SK-N-SH (cell line): ENCODE measurements at regions of chr12 and their contacts with region 1.

Region 1: DNA sequence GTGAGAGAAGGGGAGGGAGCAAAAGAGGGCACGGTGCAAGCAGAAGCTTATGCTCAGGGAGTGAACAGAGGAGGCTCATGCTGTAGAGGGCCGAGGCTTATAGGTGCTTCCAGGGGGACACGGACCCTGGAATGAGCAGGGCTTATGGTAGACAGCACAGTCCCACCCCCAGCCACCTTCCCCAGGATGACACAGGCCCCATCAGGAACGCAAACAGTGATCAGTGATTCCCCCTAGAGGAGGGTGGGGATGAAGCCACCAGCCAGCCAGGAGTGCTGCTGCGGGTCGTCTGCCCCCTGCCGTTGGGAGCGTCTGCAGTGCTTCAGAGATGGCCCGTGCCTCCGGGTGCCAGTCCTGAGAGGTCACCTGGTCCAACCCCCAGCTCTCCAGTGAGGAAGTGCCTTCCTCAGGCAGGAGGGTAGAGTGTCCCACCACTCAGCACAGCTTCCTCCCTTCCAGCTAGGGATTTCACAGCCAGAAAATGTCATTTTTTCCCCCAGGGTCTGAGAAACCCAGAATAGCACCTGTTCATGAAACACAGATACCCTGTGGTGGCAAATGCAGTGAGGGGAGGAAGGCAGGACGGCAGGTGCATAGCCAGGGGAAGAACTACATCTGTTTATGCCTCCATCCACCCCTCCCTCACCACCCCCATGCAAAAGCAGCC is 60.7 kb downstream of the SLC6A12 start:
- DNase-seq: peak; percentile 93
- H3K4me3 ChIP-seq: peak overlapping the region in 1 of 2 experiments; percentile 30; a peak in 1 of 4 replicates
- H3K27ac ChIP-seq: no peak overlapping the region; a peak in 1 of 4 replicates
- H3K4me1 ChIP-seq: peaks cover 0 to 13% of the 10 kb centered on the region in 2 experiments; a peak in 1 of 4 replicates
- H3K27me3 ChIP-seq: no peaks in the 10 kb centered on the region
- CTCF ChIP-seq: peak; percentile 63
- EP300 ChIP-seq: no peak
- RAD21 ChIP-seq: peak; percentile 79

Region 2: DNA sequence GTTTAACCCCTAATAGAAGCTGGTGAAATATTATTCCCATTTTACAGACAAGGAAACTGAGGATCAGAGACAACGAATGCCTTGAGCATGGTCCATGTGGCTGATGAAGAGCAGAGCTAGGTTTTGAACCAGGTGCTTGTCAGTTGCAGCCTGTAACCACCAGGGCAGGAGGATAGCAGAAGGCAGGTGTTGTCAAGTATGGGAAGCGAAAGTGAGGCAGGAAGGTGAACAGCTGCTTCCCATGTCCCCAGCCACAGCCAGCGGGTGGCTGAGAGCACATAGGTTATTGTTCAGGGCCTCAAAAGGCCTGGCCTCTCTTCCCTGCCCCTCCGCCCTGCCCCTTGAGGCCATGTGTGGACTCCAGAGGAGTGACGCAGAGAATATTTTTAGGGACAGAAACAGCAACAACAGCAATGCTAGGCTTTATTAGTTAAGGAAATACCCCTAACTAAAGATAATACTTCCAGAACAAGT is 47.1 kb before region 1 on chr12:
- CTCF ChIA-PET with region 1: interaction called, 29 read pairs
- POLR2A ChIA-PET with region 1: no interaction called
- DNase-seq: no peak
- H3K4me3 ChIP-seq: no peak overlapping the region
- H3K27ac ChIP-seq: no peak overlapping the region
- H3K4me1 ChIP-seq: peaks cover 0 to 14% of the 10 kb centered on the region in 2 experiments; a peak in 1 of 4 replicates
- H3K27me3 ChIP-seq: peaks cover 12% of the 10 kb centered on the region; the same call in 1 of the 2 replicates
- CTCF ChIP-seq: no peak
- EP300 ChIP-seq: no peak
- RAD21 ChIP-seq: no peak

Region 3: GRCh38 chr12:138898-139534 is 14.2 kb before region 1 on chr12:
- CTCF ChIA-PET with region 1: interaction called, 24 read pairs
- POLR2A ChIA-PET with region 1: no interaction called
- DNase-seq: no peak
- H3K4me3 ChIP-seq: no peak overlapping the region
- H3K27ac ChIP-seq: no peak overlapping the region
- H3K4me1 ChIP-seq: no peaks in the 10 kb centered on the region
- H3K27me3 ChIP-seq: no peaks in the 10 kb centered on the region; the same call in 1 of the 2 replicates
- CTCF ChIP-seq: no peak
- EP300 ChIP-seq: no peak
- RAD21 ChIP-seq: no peak

Region 4: GRCh38 chr12:169528-170370 is 16.5 kb after region 1 on chr12:
- CTCF ChIA-PET with region 1: interaction called, 24 read pairs
- POLR2A ChIA-PET with region 1: no interaction called
- DNase-seq: no peak
- H3K4me3 ChIP-seq: no peak overlapping the region
- H3K27ac ChIP-seq: no peak overlapping the region
- H3K4me1 ChIP-seq: peaks cover 0 to 48% of the 10 kb centered on the region in 2 experiments; a peak in 2 of 4 replicates
- H3K27me3 ChIP-seq: no peaks in the 10 kb centered on the region
- CTCF ChIP-seq: peak; percentile 35; the same call in 1 of the 2 replicates
- EP300 ChIP-seq: no peak
- RAD21 ChIP-seq: no peak

Region 5: DNA sequence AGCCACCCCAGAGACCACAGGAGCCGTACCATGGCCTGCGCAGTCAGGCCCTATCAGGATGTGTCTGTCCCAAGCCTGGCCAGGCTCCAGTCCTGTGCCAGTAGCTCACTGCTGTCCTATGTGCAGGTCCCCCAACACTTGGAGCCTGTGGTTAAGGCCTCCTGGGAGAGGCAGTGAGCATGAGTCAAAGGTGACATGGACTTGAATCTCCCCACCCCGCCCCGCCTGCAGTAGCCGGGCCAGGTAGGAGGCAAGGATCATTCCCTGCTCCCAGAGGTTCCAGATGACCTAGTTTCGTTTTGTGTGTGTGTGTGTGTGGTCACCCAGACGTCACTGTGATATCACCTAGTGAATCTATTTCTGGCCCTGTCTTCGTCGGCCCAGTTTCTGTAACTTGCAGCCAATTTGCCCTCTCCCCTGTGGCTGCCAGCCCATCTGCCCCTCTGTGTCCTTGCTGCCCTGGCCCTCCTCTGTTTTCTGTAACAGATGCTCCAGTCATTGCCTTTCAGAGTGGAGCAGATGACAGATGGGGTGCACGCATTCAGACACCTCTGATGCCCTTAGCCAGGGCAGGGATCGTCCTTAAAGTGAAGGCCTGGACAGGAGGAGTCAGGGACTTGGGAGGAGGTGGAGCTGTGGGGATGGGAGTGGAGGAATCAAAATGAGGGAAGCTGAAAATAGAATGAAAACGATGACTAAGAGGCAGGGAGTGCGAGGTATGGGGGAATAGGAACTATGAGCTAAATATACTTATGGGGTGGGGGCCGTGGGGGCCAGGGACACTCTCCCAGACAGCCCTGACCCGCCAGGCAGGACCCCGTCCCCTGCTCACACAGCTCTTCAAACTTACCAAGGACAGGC is 23.3 kb after region 1 on chr12:
- CTCF ChIA-PET with region 1: interaction called, 24 read pairs
- POLR2A ChIA-PET with region 1: no interaction called
- DNase-seq: peak; percentile 75
- H3K4me3 ChIP-seq: no peak overlapping the region
- H3K27ac ChIP-seq: peak overlapping the region; percentile 75 to 92
- H3K4me1 ChIP-seq: peaks cover 14 to 87% of the 10 kb centered on the region in 2 experiments
- H3K27me3 ChIP-seq: no peaks in the 10 kb centered on the region
- CTCF ChIP-seq: no peak
- EP300 ChIP-seq: peak in 1 of 2 experiments; percentile 35; a peak in 2 of 4 replicates
- RAD21 ChIP-seq: no peak

Region 6: DNA sequence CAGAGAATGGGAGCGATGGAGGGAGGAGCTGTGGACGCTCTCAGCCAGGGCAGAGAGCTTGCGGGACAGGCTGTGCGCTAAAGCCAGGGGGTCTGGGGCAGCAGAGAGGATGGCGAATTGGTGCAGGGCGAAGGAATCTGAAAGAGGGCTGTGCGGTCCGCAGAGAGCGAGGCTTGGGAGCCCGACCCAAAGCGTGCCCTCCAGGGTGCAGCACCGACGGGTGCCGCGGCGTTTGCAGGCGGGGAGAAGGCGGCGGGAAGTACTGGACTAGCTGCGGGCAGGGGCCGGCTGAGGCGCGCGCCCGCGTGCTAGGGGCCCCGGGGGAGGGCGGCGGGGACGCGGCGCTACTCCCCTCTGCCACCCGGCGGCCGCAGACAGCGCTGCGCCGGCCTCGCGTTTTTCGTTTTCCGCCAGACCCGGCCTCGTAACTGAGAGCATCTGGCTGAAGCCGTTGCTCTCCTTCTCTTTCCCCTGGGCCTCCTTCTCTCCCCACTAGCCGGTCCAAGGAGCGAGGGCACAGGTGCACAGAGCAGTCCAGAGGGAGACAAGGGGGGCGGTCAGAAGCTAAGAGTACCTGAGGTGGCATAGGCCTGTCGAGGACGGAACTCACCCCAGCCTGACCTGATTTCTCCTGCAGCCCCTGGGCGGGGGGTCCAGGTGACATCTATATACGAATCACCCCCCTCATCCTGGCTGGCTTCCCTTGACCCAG is 35.9 kb after region 1 on chr12:
- CTCF ChIA-PET with region 1: interaction called, 11 read pairs
- POLR2A ChIA-PET with region 1: no interaction called
- DNase-seq: peak; percentile 96
- H3K4me3 ChIP-seq: peak overlapping the region; percentile 43 to 56
- H3K27ac ChIP-seq: no peak overlapping the region
- H3K4me1 ChIP-seq: peaks cover 0 to 22% of the 10 kb centered on the region in 2 experiments; a peak in 1 of 4 replicates
- H3K27me3 ChIP-seq: peaks cover 5% of the 10 kb centered on the region
- CTCF ChIP-seq: peak; percentile 74
- EP300 ChIP-seq: no peak
- RAD21 ChIP-seq: peak; percentile 60

Region 7: GRCh38 chr12:219891-220352 is 66.7 kb after region 1 on chr12:
- CTCF ChIA-PET with region 1: interaction called, 11 read pairs
- POLR2A ChIA-PET with region 1: no interaction called
- DNase-seq: peak; percentile 91
- H3K4me3 ChIP-seq: no peak overlapping the region; a peak in 1 of 4 replicates
- H3K27ac ChIP-seq: no peak overlapping the region
- H3K4me1 ChIP-seq: peaks cover 0 to 2% of the 10 kb centered on the region in 2 experiments; a peak in 1 of 4 replicates
- H3K27me3 ChIP-seq: no peaks in the 10 kb centered on the region
- CTCF ChIP-seq: peak; percentile 68
- EP300 ChIP-seq: no peak
- RAD21 ChIP-seq: peak; percentile 78

Region 8: DNA sequence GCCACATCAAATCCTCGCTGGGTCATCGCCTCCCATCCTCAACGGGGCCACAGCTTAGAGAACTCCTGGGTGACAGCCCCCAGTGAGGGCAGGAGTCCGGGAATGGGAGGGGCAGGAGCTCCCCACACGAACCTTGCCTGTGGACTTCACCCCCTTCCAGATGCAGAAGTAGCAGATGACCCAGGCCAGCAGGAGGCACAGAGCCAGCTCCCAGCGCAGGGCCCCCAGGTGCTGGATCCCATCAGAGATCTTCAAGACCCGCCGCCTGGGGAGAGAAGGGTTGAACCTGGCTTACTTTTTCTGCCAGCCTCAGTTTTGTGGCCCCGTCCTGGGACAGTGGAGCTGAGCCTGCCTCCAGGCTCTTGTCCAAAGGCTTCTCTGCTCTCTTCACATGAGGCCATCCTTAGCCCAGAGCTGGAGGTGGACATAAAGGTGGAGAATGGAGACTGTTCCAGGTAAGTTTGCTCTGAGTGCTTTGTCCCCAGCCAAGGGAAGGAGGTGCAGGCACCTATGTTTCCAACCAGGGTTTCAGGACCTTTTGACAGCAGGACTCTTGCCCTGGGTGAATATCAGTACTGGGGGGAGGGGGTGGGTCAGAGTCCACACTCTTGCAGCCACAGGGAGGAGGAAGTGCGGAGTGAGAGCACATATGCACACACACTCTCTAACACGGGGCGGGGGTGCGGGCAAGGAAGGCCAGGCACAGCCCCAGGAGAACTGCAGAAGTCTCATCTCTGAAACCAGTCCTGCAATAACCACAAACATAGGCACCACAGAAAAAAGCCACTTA is 84.0 kb after region 1 on chr12:
- CTCF ChIA-PET with region 1: no interaction called
- POLR2A ChIA-PET with region 1: no interaction called
- DNase-seq: no peak
- H3K4me3 ChIP-seq: no peak overlapping the region
- H3K27ac ChIP-seq: no peak overlapping the region
- H3K4me1 ChIP-seq: no peaks in the 10 kb centered on the region
- H3K27me3 ChIP-seq: no peaks in the 10 kb centered on the region
- CTCF ChIP-seq: no peak
- EP300 ChIP-seq: no peak
- RAD21 ChIP-seq: no peak

Region 9: DNA sequence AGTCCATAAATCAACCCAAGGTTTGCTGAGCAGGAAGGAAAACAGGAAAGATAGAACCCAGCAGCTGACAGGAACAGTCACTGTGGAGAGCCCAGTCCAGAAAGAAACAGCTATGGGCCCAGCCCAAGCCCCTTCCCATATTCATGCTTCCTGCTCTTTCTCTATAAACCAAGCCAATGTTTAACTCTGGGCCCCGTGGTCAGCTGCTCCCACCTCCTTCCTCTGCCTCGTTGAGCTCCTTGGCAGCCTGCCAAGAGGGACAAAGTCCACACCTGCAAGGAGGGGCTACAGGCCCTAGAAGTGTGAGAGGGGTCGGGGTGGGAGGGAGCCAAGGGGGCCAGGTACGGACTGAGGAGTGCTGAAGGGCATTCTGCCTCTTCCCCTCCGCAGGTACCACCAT is 99.4 kb after region 1 on chr12:
- CTCF ChIA-PET with region 1: no interaction called
- POLR2A ChIA-PET with region 1: no interaction called
- DNase-seq: no peak
- H3K4me3 ChIP-seq: no peak overlapping the region
- H3K27ac ChIP-seq: no peak overlapping the region
- H3K4me1 ChIP-seq: no peaks in the 10 kb centered on the region
- H3K27me3 ChIP-seq: no peaks in the 10 kb centered on the region; the same call in 1 of the 2 replicates
- CTCF ChIP-seq: no peak
- EP300 ChIP-seq: no peak
- RAD21 ChIP-seq: no peak

Region 10: GRCh38 chr12:288687-289086 is 135.5 kb after region 1 on chr12:
- CTCF ChIA-PET with region 1: no interaction called
- POLR2A ChIA-PET with region 1: no interaction called
- DNase-seq: no peak
- H3K4me3 ChIP-seq: no peak overlapping the region
- H3K27ac ChIP-seq: no peak overlapping the region
- H3K4me1 ChIP-seq: peaks cover 0 to 14% of the 10 kb centered on the region in 2 experiments; a peak in 1 of 4 replicates
- H3K27me3 ChIP-seq: no peaks in the 10 kb centered on the region
- CTCF ChIP-seq: no peak
- EP300 ChIP-seq: no peak
- RAD21 ChIP-seq: no peak

Region 11: GRCh38 chr12:386651-387050 is 233.4 kb after region 1 on chr12:
- CTCF ChIA-PET with region 1: no interaction called
- POLR2A ChIA-PET with region 1: no interaction called
- DNase-seq: no peak
- H3K4me3 ChIP-seq: peak overlapping the region; percentile 85 to 87
- H3K27ac ChIP-seq: 0 out of 4 replicates have a peak overlapping the region, but pooled peaks of 1 of the 2 experiments have one; percentile 97
- H3K4me1 ChIP-seq: peaks cover 0 to 3% of the 10 kb centered on the region in 2 experiments; a peak in 3 of 4 replicates
- H3K27me3 ChIP-seq: no peaks in the 10 kb centered on the region
- CTCF ChIP-seq: no peak
- EP300 ChIP-seq: no peak
- RAD21 ChIP-seq: no peak